Pancreas (tissue), 10 donors: ENCODE measurements at regions of chr17 and their contacts with region 1.

Region 1: GRCh38 chr17:35804658-35805192 is 4.6 kb upstream of the TAF15 start:
- DNase-seq: peak in 3 of 6 donors; percentile 53 to 60 (median 58)
- ATAC-seq: peak; percentile 19 to 66 (median 64)
- H3K4me3 ChIP-seq: no peak overlapping the region
- H3K27ac ChIP-seq: no peak overlapping the region
- H3K4me1 ChIP-seq: peaks cover 0 to 9% (median 3%) of the 10 kb centered on the region in 3 donors
- H3K27me3 ChIP-seq: no peaks in the 10 kb centered on the region
- CTCF ChIP-seq: peak; percentile 30 to 67 (median 60)

Region 2: DNA sequence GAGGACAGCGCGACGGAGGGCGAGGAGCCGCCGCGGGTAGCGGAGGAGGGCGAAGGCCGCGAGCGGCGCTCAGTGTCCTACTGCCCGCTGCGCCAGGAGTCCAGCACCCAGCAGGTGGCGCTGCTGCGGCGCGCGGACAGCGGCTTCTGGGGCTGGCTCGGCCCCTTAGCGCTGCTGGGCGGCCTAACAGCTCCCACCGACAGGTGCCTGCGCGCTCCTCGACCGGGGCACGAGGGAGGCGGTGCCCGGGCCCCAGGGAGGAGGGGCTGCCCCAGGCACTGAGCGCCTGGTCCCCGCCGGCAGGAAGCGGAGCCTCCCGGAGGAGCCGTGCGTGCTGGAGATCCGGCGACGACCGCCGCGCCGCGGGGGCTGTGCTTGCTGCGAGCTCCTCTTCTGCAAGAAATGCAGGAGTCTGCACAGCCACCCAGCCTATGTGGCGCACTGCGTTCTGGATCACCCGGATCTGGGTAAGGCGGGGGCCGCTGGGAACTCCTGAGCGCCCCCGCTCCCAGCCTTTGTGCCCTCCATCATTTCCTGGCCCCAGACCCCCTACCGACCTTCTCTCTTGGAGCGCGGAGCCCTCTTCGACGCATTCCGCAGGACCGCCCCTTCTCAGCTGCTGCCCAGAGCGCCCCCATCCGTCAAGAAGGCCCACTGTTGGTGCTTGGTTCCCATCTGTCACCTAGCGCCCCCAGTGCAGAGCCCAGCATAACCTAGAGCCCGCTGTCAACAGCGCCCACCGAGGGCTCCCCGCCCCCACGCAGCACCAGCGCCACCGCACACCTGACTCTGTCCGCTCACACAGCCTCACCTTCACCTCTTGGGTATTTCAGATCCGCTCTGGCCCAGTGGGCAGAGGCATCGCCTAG is 40.4 kb before region 1 on chr17:
- intact Hi-C with region 1: loop called (anchors 2 to 5 kb)
- DNase-seq: peak; percentile 85 to 99 (median 93)
- ATAC-seq: peak; percentile 94 to 97 (median 96)
- H3K4me3 ChIP-seq: peak overlapping the region; percentile 12 to 57 (median 42)
- H3K27ac ChIP-seq: peak overlapping the region in 3 of 4 donors; percentile 17 to 39 (median 31)
- H3K4me1 ChIP-seq: no peaks in the 10 kb centered on the region
- H3K27me3 ChIP-seq: no peaks in the 10 kb centered on the region
- CTCF ChIP-seq: peak; percentile 93 to 97 (median 96)

Region 3: DNA sequence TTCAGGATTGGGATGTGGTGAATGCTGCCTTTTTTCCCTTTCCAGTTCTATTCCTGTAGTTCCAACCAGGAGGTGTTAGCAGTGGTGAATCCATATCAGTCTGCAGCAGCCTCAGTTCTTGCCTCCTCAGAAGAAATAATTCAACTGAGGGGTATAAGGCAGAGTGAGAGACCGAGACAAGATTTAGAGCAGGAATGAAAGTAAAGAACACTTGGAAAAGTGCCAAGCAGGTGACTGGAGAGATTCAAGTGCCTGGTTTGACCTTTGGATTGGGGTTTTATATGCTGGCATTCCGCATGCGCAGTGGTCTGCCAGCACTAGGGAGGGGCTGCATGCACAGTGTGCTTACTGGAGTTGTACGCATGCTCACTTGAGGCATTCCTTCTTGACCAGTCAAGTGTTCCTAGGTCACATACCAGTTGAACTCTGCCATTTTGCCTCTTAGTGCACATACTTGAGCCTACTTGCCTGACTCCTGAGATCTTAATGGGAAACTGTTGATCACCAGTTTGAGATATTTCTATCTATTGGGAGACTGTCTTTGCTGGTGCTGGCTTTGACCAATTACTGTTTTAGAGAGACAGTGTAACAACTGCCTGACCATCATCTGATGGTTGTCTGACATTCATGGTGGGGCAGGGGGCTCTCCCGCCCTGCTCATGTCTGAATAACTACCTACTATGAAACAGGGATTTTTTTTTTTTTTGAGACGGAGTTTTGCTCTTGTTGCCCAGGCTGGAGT is 197.3 kb after region 1 on chr17:
- intact Hi-C with region 1: no loop called
- DNase-seq: peak; percentile 63 to 85 (median 72)
- ATAC-seq: peak; percentile 87 to 94 (median 89)
- H3K4me3 ChIP-seq: no peak overlapping the region
- H3K27ac ChIP-seq: no peak overlapping the region
- H3K4me1 ChIP-seq: peaks cover 0 to 5% (median 4%) of the 10 kb centered on the region in 3 donors
- H3K27me3 ChIP-seq: no peaks in the 10 kb centered on the region
- CTCF ChIP-seq: no peak